K562 (cell line): ENCODE measurements at regions of chr19 and their contacts with region 1.

Region 1: DNA sequence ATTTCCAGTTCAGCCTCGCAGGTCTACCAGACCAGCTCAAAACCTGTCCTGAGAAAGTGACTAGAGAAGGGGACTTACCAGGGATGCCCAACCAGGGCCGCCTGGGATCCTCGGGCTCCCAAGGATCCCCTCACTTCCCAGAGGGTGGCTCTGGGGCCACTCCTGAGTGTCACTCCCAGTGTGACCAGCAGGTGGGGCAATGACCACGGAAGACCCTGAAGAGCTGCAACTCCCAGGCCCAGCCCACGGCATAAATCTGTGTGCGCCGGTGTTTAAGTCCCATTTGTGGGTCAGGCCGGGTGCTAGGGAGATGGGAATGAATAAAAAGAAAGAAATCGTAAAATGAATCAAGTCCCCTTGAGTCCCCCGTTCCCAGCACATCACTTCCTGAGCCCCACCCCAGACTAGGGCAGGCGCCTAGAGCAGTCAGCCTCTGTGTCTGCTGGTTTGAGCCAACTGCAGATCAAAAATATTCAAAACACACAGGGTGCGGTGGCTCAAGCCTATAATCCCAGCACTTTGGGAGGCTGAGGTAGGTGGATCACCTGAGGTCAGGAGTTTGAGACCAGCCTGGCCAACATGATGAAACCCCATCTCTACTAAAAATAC is 10.7 kb downstream of the PTGIR start:
- DNase-seq: peak; percentile 86 to 88 (median 86)
- ATAC-seq: peak; percentile 90
- H3K4me3 ChIP-seq: no peak overlapping the region
- H3K27ac ChIP-seq: no peak overlapping the region
- H3K4me1 ChIP-seq: peaks cover 17 to 18% of the 10 kb centered on the region in 2 experiments
- H3K27me3 ChIP-seq: no peaks in the 10 kb centered on the region
- CTCF ChIP-seq: peak; percentile 92 to 94 (median 94)
- EP300 ChIP-seq: no peak
- POLR2A ChIP-seq: no peak
- RAD21 ChIP-seq: peak; percentile 83 to 92

Region 2: GRCh38 chr19:46579361-46579879 is 34.8 kb before region 1 on chr19:
- CTCF ChIA-PET with region 1: no interaction called
- POLR2A ChIA-PET with region 1: no interaction called
- in situ Hi-C with region 1: no loop called
- intact Hi-C with region 1: no loop called
- DNase-seq: peak in 1 of 4 experiments; percentile 17
- ATAC-seq: no peak
- H3K4me3 ChIP-seq: no peak overlapping the region
- H3K27ac ChIP-seq: no peak overlapping the region
- H3K4me1 ChIP-seq: peaks cover 1 to 8% of the 10 kb centered on the region in 2 experiments; a peak in 3 of 5 replicates
- H3K27me3 ChIP-seq: no peaks in the 10 kb centered on the region
- CTCF ChIP-seq: no peak
- EP300 ChIP-seq: no peak
- POLR2A ChIP-seq: no peak
- RAD21 ChIP-seq: no peak

Region 3: GRCh38 chr19:46600384-46601317 is 13.6 kb before region 1 on chr19:
- CTCF ChIA-PET with region 1: no interaction called
- POLR2A ChIA-PET with region 1: interaction called, 30 read pairs
- in situ Hi-C with region 1: no loop called
- intact Hi-C with region 1: no loop called
- DNase-seq: peak; percentile 94 to 99 (median 97)
- ATAC-seq: peak; percentile 85
- H3K4me3 ChIP-seq: peak overlapping the region; percentile 79
- H3K27ac ChIP-seq: peak overlapping the region; percentile 100
- H3K4me1 ChIP-seq: peaks cover 15 to 50% of the 10 kb centered on the region in 2 experiments; a peak in 4 of 5 replicates
- H3K27me3 ChIP-seq: no peaks in the 10 kb centered on the region
- CTCF ChIP-seq: no peak
- EP300 ChIP-seq: peak; percentile 39
- POLR2A ChIP-seq: peak; percentile 77
- RAD21 ChIP-seq: no peak

Region 4: GRCh38 chr19:46634045-46634655 is 19.9 kb after region 1 on chr19:
- CTCF ChIA-PET with region 1: no interaction called
- POLR2A ChIA-PET with region 1: interaction called, 4 read pairs
- in situ Hi-C with region 1: no loop called
- intact Hi-C with region 1: loop called (anchors 1 kb)
- DNase-seq: peak; percentile 94 to 98 (median 98)
- ATAC-seq: peak; percentile 83
- H3K4me3 ChIP-seq: peak overlapping the region; percentile 32
- H3K27ac ChIP-seq: no peak overlapping the region
- H3K4me1 ChIP-seq: peaks cover 38 to 74% of the 10 kb centered on the region in 2 experiments
- H3K27me3 ChIP-seq: no peaks in the 10 kb centered on the region
- CTCF ChIP-seq: no peak
- EP300 ChIP-seq: no peak
- POLR2A ChIP-seq: no peak
- RAD21 ChIP-seq: no peak